ENCODE measurements at regions of chr12 and their contacts with region 1.

Region 1: GRCh38 chr12:3202734-3203446 is 125.7 kb downstream of the TSPAN9 start:
- DNase-seq: peak in 1 of 2 donors; percentile 42
- ATAC-seq: peak; percentile 41 to 73
- H3K4me3 ChIP-seq: no peak overlapping the region
- H3K27ac ChIP-seq: no peak overlapping the region
- H3K4me1 ChIP-seq: peaks cover 47 to 48% of the 10 kb centered on the region in 2 donors
- H3K27me3 ChIP-seq: no peaks in the 10 kb centered on the region
- CTCF ChIP-seq: peak; percentile 85 to 95 (median 92)
- POLR2A ChIP-seq: no peak

Region 2: DNA sequence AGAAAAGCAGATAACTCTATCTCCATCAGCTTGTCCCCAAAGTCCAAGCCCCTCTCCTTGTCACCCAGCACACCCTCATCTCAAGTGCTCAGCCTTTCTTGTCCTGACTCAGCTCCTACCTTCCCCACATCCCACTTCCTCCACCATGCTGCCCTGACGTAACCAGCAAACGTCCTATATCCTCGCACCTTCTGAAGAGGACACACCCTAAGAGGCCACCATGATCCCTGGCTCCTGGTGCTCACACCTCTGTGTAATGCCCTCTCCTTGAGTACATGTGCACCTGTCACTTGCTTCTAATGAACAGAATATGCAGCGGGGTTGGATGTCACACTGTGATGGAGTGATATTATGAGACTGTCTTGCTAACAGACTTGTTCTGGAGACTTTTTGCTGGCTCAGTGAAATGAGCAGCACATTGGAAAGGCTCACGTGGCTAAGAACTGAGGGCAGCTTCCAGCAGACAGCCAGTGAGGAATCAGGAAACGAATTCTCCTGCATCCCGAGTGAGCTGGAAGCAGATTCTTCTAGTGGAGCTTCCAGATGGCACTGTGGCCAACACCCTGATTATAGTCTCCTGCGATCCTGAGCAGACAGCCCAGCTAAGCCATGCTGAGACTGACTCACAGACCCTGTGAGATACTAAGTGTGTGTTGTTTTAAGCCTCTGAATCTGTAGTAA is 142.0 kb before region 1 on chr12:
- in situ Hi-C with region 1: no loop called
- intact Hi-C with region 1: no loop called
- DNase-seq: no peak
- ATAC-seq: no peak
- H3K4me3 ChIP-seq: no peak overlapping the region
- H3K27ac ChIP-seq: no peak overlapping the region
- H3K4me1 ChIP-seq: no peaks in the 10 kb centered on the region
- H3K27me3 ChIP-seq: no peaks in the 10 kb centered on the region
- CTCF ChIP-seq: no peak
- POLR2A ChIP-seq: no peak

Region 3: DNA sequence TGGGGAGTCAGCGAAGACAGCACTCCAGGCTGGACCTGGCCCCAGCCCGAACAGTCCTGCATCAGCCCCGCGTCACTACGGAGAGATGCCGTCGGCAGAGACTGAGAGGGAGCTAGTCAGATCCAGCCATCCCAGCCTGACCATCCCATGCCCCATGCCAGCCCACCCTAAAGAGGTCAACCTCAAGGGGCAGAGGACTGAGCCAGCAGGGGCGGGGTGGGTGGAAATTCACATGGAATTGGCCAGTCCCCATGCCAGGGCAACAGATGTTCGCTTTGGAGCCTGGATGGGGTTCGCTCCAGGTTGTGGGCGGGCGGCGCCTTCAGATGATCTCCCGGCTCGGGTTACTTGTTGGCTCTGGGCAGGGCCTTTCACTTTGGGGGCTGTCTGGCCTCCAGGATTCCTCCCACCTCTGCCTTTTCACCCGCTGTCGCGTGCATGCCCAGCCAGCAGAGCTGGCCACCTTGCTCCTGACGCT is 28.5 kb after region 1 on chr12:
- in situ Hi-C with region 1: no loop called
- intact Hi-C with region 1: loop called (anchors 2 kb)
- DNase-seq: peak; percentile 17 to 74
- ATAC-seq: peak; percentile 59 to 79
- H3K4me3 ChIP-seq: peak overlapping the region in 1 of 4 donors; percentile 21
- H3K27ac ChIP-seq: peak overlapping the region; percentile 44 to 72 (median 66)
- H3K4me1 ChIP-seq: peaks cover 23 to 34% of the 10 kb centered on the region in 2 donors
- H3K27me3 ChIP-seq: no peaks in the 10 kb centered on the region
- CTCF ChIP-seq: no peak
- POLR2A ChIP-seq: no peak